Activated CD4-positive, alpha-beta memory T cell treated with anti-CD3 and anti-CD28 coated beads, Interleukin-2, amount 10 ng/mL, durations not matched to agents 7 days and 5 days (primary cell): ENCODE measurements at regions of chr3 and their contacts with region 1.

Region 1: GRCh38 chr3:9731206-9732079 is at the start of gene BRPF1:
- DNase-seq: peak; percentile 100
- H3K4me3 Mint-ChIP-seq: peak within 1 kb of the TSS; percentile 96
- H3K27ac Mint-ChIP-seq: peak within 1 kb of the TSS; percentile 89
- H3K4me1 Mint-ChIP-seq: peaks cover 69% of the 10 kb centered on the region
- H3K27me3 Mint-ChIP-seq: no peaks in the 10 kb centered on the region
- total RNA-seq, gene BRPF1: 38.9 to 41.9 TPM

Region 2: DNA sequence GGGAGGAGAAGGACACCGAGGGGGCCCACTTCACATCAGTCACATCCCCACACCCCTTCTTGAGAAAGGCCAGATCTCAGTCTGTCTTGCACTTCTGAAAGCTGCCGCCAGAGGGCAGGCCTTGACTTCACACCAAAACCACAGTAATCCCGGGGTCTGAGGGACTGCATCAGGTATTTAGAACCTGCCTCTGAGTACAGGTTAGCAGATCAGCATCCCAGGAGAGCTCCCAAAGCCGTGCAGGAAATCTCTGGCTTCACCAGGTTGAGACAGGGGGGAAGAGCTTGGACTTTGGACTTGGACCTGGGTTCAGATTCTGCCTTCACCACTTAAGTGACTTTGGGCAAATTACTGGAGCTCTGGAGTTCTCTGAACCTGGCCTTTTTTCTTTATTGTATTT is 228.2 kb before region 1 on chr3:
- CTCF ChIA-PET with region 1: interaction called, 17 read pairs
- POLR2A ChIA-PET with region 1: interaction called, 3 read pairs
- DNase-seq: peak; percentile 78
- H3K4me3 Mint-ChIP-seq: no peak overlapping the region
- H3K27ac Mint-ChIP-seq: no peak overlapping the region
- H3K4me1 Mint-ChIP-seq: peaks cover 2% of the 10 kb centered on the region
- H3K27me3 Mint-ChIP-seq: peaks cover 26% of the 10 kb centered on the region

Region 3: GRCh38 chr3:9715764-9716437 is 15.5 kb before region 1 on chr3:
- CTCF ChIA-PET with region 1: interaction called, 19 read pairs
- POLR2A ChIA-PET with region 1: interaction called, 6 read pairs
- DNase-seq: peak; percentile 40
- H3K4me3 Mint-ChIP-seq: no peak overlapping the region
- H3K27ac Mint-ChIP-seq: no peak overlapping the region
- H3K4me1 Mint-ChIP-seq: peaks cover 2% of the 10 kb centered on the region
- H3K27me3 Mint-ChIP-seq: peaks cover 15% of the 10 kb centered on the region

Region 4: DNA sequence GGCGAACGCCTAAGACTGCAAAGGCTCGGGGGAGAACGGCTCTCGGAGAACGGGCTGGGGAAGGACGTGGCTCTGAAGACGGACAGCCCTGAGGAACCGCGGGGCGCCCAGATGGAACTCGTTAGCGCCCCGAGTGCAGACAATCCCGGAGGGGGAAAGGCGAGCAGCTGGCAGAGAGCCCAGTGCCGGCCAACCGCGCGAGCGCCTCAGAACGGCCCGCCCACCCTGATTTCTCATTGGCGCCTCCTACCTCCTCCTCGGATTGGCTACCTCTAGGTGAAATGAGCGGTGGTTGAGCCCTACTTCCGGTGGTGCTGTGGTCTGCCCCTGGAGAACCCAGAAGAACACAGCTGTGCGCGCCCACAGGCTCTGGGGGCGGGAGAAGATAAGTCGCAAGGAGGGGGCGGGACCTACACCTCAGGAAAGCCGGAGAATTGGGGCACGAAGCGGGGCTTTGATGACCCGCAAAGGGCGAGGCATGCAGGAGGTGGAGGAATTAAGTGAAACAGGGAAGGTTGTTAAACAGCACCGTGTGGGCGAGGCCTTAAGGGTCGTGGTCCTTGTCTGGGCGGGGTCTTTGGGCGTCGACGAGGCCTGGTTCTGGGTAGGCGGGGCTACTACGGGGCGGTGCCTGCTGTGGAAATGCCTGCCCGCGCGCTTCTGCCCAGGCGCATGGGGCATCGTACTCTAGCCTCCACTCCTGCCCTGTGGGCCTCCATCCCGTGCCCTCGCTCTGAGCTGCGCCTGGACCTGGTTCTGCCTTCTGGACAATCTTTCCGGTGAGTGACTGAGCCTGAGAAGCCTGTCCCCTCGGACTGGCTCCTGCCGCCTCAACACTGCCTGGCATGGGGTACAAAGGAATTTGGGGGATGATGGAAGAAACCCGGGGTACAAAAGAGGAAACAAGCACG is 18.5 kb after region 1 on chr3 and contains the start of gene OGG1:
- CTCF ChIA-PET with region 1: interaction called, 11 read pairs
- POLR2A ChIA-PET with region 1: interaction called, 158 read pairs
- DNase-seq: peak; percentile 98
- H3K4me3 Mint-ChIP-seq: peak within 1 kb of the TSS; percentile 93
- H3K27ac Mint-ChIP-seq: peak within 1 kb of the TSS; percentile 91
- H3K4me1 Mint-ChIP-seq: peaks cover 58% of the 10 kb centered on the region
- H3K27me3 Mint-ChIP-seq: no peaks in the 10 kb centered on the region
- total RNA-seq, gene OGG1: 29.5 to 34.3 TPM

Region 5: GRCh38 chr3:9779721-9780457 is 48.4 kb after region 1 on chr3:
- CTCF ChIA-PET with region 1: no interaction called
- POLR2A ChIA-PET with region 1: interaction called, 16 read pairs
- DNase-seq: peak; percentile 61
- H3K4me3 Mint-ChIP-seq: peak overlapping the region; percentile 21
- H3K27ac Mint-ChIP-seq: peak overlapping the region; percentile 92
- H3K4me1 Mint-ChIP-seq: peaks cover 54% of the 10 kb centered on the region
- H3K27me3 Mint-ChIP-seq: no peaks in the 10 kb centered on the region